Adrenal gland (tissue), 19 donors: ENCODE measurements at regions of chr1 and their contacts with region 1.

Region 1: GRCh38 chr1:117683571-117684285 is 77.9 kb downstream of the TENT5C start:
- DNase-seq: no peak
- H3K4me3 ChIP-seq: no peak overlapping the region
- H3K27ac ChIP-seq: no peak overlapping the region
- H3K4me1 ChIP-seq: peaks cover 0 to 23% of the 10 kb centered on the region in 2 donors
- H3K27me3 ChIP-seq: no peaks in the 10 kb centered on the region
- CTCF ChIP-seq: no peak
- POLR2A ChIP-seq: no peak

Region 2: GRCh38 chr1:117612517-117613248 is 71.0 kb before region 1 on chr1:
- intact Hi-C with region 1: loop called in 1 of 2 experiments (anchors 5 kb)
- DNase-seq: peak in 4 of 7 donors; percentile 15 to 49 (median 34)
- H3K4me3 ChIP-seq: no peak overlapping the region
- H3K27ac ChIP-seq: peak overlapping the region in 2 of 5 donors; percentile 56 to 70
- H3K4me1 ChIP-seq: peaks cover 0 to 6% of the 10 kb centered on the region in 2 donors
- H3K27me3 ChIP-seq: no peaks in the 10 kb centered on the region
- CTCF ChIP-seq: no peak
- POLR2A ChIP-seq: peak in 1 of 2 donors; percentile 10

Region 3: GRCh38 chr1:117780687-117781475 is 97.2 kb after region 1 on chr1:
- intact Hi-C with region 1: no loop called
- DNase-seq: no peak
- H3K4me3 ChIP-seq: no peak overlapping the region
- H3K27ac ChIP-seq: no peak overlapping the region
- H3K4me1 ChIP-seq: no peaks in the 10 kb centered on the region
- H3K27me3 ChIP-seq: no peaks in the 10 kb centered on the region
- CTCF ChIP-seq: no peak
- POLR2A ChIP-seq: no peak